Common myeloid progenitor, CD34-positive (primary cell): ENCODE measurements at regions of chr15 and their contacts with region 1.

Region 1: GRCh38 chr15:92226014-92226612 is 167.6 kb upstream of the ST8SIA2 start:
- DNase-seq: peak; percentile 5 to 26 (median 24)
- H3K4me3 ChIP-seq: no peak overlapping the region
- H3K27ac ChIP-seq: no peak overlapping the region
- H3K4me1 ChIP-seq: no peaks in the 10 kb centered on the region
- H3K27me3 ChIP-seq: no peaks in the 10 kb centered on the region

Region 2: DNA sequence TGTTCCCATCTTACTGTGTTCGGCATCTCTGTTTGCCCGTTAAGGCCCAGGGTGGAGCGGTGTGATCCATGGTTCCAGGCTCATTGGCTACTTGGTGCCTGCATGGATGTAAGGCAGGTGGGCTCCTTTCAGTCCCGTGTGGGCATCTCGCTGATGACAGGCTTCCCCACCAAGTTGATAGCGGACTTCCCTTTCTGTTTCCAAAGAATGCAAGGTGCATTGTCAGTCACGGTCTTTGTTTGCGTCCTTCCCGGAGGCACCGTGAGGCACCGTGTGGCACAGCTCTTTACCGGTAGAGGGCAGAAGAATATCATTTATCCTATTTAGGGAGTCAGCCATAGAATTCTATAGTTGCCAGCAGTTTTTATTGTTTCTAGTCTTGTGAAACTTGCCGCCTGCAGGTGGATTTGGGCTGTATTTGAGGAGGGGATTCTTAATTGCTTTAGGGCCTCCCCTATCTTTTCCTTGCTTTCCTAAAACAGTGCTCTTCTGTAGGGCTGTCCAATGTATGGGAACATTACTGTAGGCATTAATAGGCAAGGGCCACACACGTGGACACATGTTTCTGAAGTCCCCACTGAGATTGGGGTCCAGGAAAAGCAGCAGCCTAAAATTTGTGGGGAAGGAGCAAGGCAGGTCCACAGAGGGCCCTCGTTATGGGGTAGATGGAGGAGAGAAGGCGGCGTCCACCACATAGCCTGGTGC is 128.5 kb before region 1 on chr15:
- CTCF ChIA-PET with region 1: interaction called, 15 read pairs
- POLR2A ChIA-PET with region 1: no interaction called
- DNase-seq: peak; percentile 79 to 82 (median 81)
- H3K4me3 ChIP-seq: peak overlapping the region in 4 of 7 experiments; percentile 15 to 60 (median 29)
- H3K27ac ChIP-seq: no peak overlapping the region
- H3K4me1 ChIP-seq: peaks cover 20 to 68% (median 54%) of the 10 kb centered on the region in 4 experiments
- H3K27me3 ChIP-seq: no peaks in the 10 kb centered on the region

Region 3: GRCh38 chr15:92164327-92165000 is 61.6 kb before region 1 on chr15:
- CTCF ChIA-PET with region 1: no interaction called
- POLR2A ChIA-PET with region 1: no interaction called
- DNase-seq: no peak
- H3K4me3 ChIP-seq: no peak overlapping the region
- H3K27ac ChIP-seq: no peak overlapping the region
- H3K4me1 ChIP-seq: peaks cover 0 to 5% (median 0%) of the 10 kb centered on the region in 4 experiments
- H3K27me3 ChIP-seq: no peaks in the 10 kb centered on the region

Region 4: DNA sequence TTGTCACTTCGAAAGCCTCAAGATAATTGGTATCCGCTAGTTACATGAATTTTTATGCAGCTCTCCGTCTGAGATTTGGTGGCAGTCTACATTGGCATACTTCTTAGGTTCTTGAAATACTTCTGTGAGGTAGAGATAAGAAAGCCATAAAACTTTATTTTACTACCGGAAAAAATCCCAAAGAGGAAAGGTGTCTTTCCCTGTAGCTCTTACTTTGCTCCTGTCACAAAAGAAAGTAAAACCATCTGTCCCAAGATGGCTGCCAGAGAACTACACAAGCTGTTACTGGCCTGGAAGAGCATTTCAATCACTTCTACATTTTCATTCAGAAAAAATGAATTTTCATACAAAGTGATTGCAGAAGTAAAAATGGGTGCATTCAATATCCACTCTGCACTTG is 47.2 kb before region 1 on chr15:
- CTCF ChIA-PET with region 1: no interaction called
- POLR2A ChIA-PET with region 1: no interaction called
- DNase-seq: no peak
- H3K4me3 ChIP-seq: no peak overlapping the region
- H3K27ac ChIP-seq: no peak overlapping the region
- H3K4me1 ChIP-seq: peaks cover 0 to 21% (median 2%) of the 10 kb centered on the region in 4 experiments
- H3K27me3 ChIP-seq: no peaks in the 10 kb centered on the region

Region 5: DNA sequence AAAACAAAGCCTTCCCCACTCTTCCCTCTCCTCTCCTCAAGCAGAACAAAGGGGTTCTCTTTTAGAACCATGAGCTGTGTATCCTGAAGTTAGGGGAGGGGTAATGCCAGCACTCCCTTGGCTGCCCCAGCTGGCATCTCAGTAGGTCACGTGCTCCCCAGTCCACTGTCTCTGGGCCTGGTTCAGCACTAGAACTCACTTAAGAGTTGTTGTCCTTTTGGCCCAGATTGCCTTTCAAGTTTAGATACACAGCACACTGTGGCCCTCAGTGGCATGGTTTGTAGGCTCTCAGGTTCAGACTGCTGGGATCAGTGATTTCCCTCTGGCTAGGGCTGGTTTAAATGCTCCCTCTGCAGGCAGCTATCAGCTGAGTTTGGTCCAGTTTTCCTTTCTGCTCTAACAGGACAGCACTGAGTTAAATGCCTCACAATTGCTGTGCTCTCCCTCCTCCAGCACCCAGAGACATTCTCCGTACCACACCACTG is 20.8 kb before region 1 on chr15:
- CTCF ChIA-PET with region 1: no interaction called
- POLR2A ChIA-PET with region 1: no interaction called
- DNase-seq: no peak
- H3K4me3 ChIP-seq: no peak overlapping the region
- H3K27ac ChIP-seq: no peak overlapping the region
- H3K4me1 ChIP-seq: no peaks in the 10 kb centered on the region
- H3K27me3 ChIP-seq: no peaks in the 10 kb centered on the region